Activated CD4-positive, alpha-beta memory T cell treated with anti-CD3 and anti-CD28 coated beads for 36 hours (primary cell): ENCODE measurements at regions of chr3 and their contacts with region 1.

Region 1: GRCh38 chr3:31213869-31214486 is 318.7 kb upstream of the STT3B start:
- DNase-seq: peak; percentile 57
- H3K4me3 Mint-ChIP-seq: peak overlapping the region; percentile 1
- H3K27ac Mint-ChIP-seq: peak overlapping the region; percentile 82
- H3K4me1 Mint-ChIP-seq: peaks cover 94% of the 10 kb centered on the region
- H3K27me3 Mint-ChIP-seq: no peaks in the 10 kb centered on the region

Region 2: DNA sequence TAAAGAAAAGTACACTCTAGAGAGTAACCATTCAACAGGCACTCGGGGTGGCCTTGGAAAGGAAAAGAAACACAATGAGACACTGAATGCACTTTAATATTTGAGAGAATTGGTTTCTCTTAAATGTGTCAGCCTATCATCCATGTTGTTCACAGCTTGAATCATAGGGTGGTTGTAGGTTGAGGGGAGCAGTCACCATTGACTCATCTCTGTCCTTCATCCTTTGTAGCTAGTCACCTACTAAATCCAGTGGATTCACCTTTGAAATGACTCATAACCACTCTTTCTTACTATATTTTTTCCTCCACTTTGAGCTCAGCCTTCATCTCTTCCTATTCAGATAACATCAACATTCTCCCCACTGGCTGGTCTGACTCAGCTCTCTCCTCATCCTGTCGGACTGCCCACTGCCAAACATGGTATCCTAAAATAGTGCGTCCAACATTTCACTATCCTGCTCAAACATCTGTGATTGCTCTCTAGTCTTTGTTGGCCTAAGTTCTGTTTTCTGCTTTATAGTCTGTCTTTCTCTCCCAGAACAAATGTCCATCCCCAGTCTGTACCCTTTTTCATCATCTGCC is 136.9 kb before region 1 on chr3:
- CTCF ChIA-PET with region 1: no interaction called
- POLR2A ChIA-PET with region 1: no interaction called
- intact Hi-C with region 1: loop called (anchors 1 kb)
- DNase-seq: peak; percentile 73
- H3K4me3 Mint-ChIP-seq: no peak overlapping the region
- H3K27ac Mint-ChIP-seq: peak overlapping the region; percentile 1
- H3K4me1 Mint-ChIP-seq: peaks cover 18% of the 10 kb centered on the region
- H3K27me3 Mint-ChIP-seq: no peaks in the 10 kb centered on the region

Region 3: DNA sequence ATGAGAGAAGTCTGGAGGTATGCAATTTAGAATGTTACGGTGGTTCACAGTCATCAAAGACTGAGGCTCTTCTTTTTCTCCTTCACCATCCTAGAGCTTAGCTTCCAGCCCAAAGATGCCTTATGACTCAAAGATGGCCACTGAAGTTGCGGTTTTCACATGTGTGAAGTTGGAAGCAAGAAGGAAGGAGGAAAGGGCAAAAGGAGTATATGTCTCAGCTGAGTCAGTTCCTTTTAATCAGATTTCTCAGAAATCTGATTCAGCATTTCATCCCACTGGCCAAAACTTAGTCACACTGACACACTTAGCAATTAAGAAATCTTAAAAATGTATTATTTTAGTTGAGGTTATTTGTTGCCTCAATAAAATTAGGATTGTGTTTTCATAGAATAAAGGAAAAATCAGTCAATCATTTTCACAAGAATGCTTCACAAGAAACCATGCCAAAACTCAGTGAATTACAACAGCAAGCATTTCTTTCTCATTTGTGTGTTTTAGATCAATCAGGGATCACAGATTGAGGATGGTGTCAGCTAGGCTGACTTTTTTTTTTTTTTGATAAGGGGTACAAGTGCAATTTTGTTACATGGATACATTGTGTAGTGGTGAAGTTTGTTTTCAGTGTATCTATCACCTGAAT is 108.4 kb before region 1 on chr3:
- CTCF ChIA-PET with region 1: no interaction called
- POLR2A ChIA-PET with region 1: no interaction called
- intact Hi-C with region 1: loop called (anchors 5 kb)
- DNase-seq: peak; percentile 51
- H3K4me3 Mint-ChIP-seq: no peak overlapping the region
- H3K27ac Mint-ChIP-seq: no peak overlapping the region
- H3K4me1 Mint-ChIP-seq: peaks cover 37% of the 10 kb centered on the region
- H3K27me3 Mint-ChIP-seq: no peaks in the 10 kb centered on the region

Region 4: DNA sequence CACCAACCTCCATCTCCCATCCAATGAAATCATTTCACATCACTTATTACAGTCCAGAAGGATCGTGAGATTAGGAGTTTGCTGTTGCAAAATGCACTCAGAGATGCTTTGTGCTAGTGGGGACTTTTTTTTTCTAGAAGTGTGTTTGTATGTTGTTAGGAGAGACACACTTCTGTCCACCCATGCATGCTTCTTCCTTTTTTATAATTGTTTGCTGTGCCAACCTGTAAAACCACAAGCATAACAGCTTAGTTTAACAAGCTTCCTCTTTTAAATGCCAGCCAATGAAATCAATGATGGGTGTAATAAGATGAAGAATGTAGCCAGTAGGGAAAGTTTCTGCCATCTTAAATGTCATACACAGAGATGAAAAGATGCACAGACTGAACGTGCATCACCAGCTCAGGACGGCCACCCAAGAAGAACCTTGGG is 13.2 kb after region 1 on chr3:
- CTCF ChIA-PET with region 1: interaction called, 3 read pairs
- POLR2A ChIA-PET with region 1: interaction called, 3 read pairs
- intact Hi-C with region 1: loop called (anchors 1 kb)
- DNase-seq: no peak
- H3K4me3 Mint-ChIP-seq: peak overlapping the region; percentile 2
- H3K27ac Mint-ChIP-seq: peak overlapping the region; percentile 84
- H3K4me1 Mint-ChIP-seq: peaks cover 87% of the 10 kb centered on the region
- H3K27me3 Mint-ChIP-seq: no peaks in the 10 kb centered on the region

Region 5: DNA sequence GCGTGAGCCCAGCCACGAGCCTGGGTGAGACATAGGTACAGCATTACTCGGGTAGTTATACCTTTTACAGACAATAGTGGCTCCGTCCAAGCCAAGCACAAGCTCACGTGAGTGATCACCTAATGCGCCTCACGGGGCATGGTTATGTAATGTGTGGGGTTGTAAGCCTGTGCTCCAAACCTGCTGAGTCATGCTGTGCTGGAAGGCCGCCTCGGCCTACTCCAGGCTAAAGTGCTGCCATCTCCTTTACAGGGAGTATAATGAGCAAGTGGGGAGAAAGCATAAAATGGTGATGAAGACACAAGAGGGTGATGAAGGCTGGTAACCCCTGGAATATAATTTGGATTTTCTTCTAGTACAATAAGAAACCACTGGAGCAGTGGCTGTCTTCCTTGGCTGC is 143.0 kb after region 1 on chr3:
- CTCF ChIA-PET with region 1: no interaction called
- POLR2A ChIA-PET with region 1: no interaction called
- intact Hi-C with region 1: loop called (anchors 1 kb)
- DNase-seq: peak; percentile 31
- H3K4me3 Mint-ChIP-seq: no peak overlapping the region
- H3K27ac Mint-ChIP-seq: peak overlapping the region; percentile 66
- H3K4me1 Mint-ChIP-seq: peaks cover 38% of the 10 kb centered on the region
- H3K27me3 Mint-ChIP-seq: no peaks in the 10 kb centered on the region

Region 6: GRCh38 chr3:31472479-31473390 is 258.8 kb after region 1 on chr3:
- CTCF ChIA-PET with region 1: no interaction called
- POLR2A ChIA-PET with region 1: interaction called, 3 read pairs
- intact Hi-C with region 1: loop called (anchors 5 kb)
- DNase-seq: peak; percentile 61
- H3K4me3 Mint-ChIP-seq: no peak overlapping the region
- H3K27ac Mint-ChIP-seq: no peak overlapping the region
- H3K4me1 Mint-ChIP-seq: peaks cover 25% of the 10 kb centered on the region
- H3K27me3 Mint-ChIP-seq: no peaks in the 10 kb centered on the region

Region 7: GRCh38 chr3:31610700-31611275 is 396.8 kb after region 1 on chr3:
- CTCF ChIA-PET with region 1: no interaction called
- POLR2A ChIA-PET with region 1: no interaction called
- intact Hi-C with region 1: no loop called
- DNase-seq: no peak
- H3K4me3 Mint-ChIP-seq: no peak overlapping the region
- H3K27ac Mint-ChIP-seq: no peak overlapping the region
- H3K4me1 Mint-ChIP-seq: peaks cover 69% of the 10 kb centered on the region
- H3K27me3 Mint-ChIP-seq: no peaks in the 10 kb centered on the region